ENCODE measurements at regions of chr4 and their contacts with region 1.

Region 1: DNA sequence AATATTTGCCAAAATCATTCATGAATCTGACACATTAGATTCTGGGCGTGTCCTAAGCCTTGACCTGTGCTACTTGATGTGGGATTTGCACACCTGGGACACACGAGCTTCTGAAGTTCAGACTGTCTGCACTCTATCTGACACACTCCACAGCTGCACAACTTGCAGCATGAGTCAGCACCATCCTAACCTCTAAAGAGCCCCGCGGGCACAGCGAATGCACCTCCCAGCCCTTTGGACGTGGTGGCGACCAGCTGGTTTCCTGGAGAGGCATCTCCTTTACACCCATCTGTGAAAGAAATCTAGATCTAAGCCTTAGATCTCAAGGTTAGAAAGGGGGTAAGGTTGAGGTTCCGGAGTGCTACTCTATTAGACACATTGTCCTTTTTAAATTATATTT is 69.2 kb downstream of the SORBS2 start:
- DNase-seq: peak; percentile 55
- H3K4me3 ChIP-seq: no peak overlapping the region
- H3K27ac ChIP-seq: no peak overlapping the region
- H3K4me1 ChIP-seq: peaks cover 27 to 52% (median 32%) of the 10 kb centered on the region in 4 donors
- H3K27me3 ChIP-seq: no peaks in the 10 kb centered on the region
- CTCF ChIP-seq: no peak
- EP300 ChIP-seq: no peak
- POLR2A ChIP-seq: no peak

Region 2: GRCh38 chr4:185640811-185641675 is 101.7 kb before region 1 on chr4:
- intact Hi-C with region 1: loop called (anchors 5 kb)
- DNase-seq: no peak
- H3K4me3 ChIP-seq: no peak overlapping the region
- H3K27ac ChIP-seq: peak overlapping the region in 2 of 4 donors; percentile 6 to 7
- H3K4me1 ChIP-seq: peaks cover 6 to 30% (median 15%) of the 10 kb centered on the region in 4 donors
- H3K27me3 ChIP-seq: no peaks in the 10 kb centered on the region
- CTCF ChIP-seq: peak; percentile 46 to 54 (median 51)
- EP300 ChIP-seq: no peak
- POLR2A ChIP-seq: no peak

Region 3: DNA sequence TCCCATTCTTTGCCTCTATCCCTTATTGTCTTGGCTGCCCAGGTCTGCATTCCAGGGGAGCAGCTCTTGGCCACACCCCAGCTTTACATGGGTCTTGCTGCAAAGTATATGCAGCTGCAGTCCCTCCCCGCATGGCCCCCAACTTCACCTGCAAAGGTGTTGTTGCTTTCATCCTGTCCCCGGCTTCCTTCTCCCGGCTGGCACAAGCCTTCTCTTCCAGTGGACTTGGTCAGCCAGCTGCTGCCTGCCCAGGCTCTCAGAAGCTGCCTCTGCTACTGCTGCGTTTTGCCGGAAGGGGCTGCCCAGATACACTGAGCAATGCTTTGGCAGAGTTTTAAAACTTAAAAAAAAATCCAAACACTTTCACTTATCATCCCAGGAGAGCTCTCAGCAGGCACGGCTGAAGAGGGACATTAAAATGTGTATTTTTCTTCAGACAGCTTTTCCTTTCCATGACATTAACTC is 86.3 kb before region 1 on chr4:
- intact Hi-C with region 1: loop called (anchors 5 kb)
- DNase-seq: no peak
- H3K4me3 ChIP-seq: peak overlapping the region; percentile 52 to 70 (median 58)
- H3K27ac ChIP-seq: peak overlapping the region; percentile 75 to 79 (median 78)
- H3K4me1 ChIP-seq: peaks cover 12 to 40% (median 20%) of the 10 kb centered on the region in 4 donors
- H3K27me3 ChIP-seq: no peaks in the 10 kb centered on the region
- CTCF ChIP-seq: peak; percentile 48 to 74 (median 66)
- EP300 ChIP-seq: no peak
- POLR2A ChIP-seq: no peak

Region 4: GRCh38 chr4:186144142-186144955 is 401.6 kb after region 1 on chr4:
- intact Hi-C with region 1: loop called (anchors 10 kb)
- DNase-seq: no peak
- H3K4me3 ChIP-seq: peak overlapping the region; percentile 64 to 82 (median 66)
- H3K27ac ChIP-seq: peak overlapping the region; percentile 79 to 89 (median 88)
- H3K4me1 ChIP-seq: peaks cover 10 to 22% (median 16%) of the 10 kb centered on the region in 4 donors
- H3K27me3 ChIP-seq: no peaks in the 10 kb centered on the region
- CTCF ChIP-seq: peak in 1 of 3 experiments; percentile 45
- EP300 ChIP-seq: no peak
- POLR2A ChIP-seq: no peak